ENCODE measurements at regions of chr19 and their contacts with region 1.

Region 1: DNA sequence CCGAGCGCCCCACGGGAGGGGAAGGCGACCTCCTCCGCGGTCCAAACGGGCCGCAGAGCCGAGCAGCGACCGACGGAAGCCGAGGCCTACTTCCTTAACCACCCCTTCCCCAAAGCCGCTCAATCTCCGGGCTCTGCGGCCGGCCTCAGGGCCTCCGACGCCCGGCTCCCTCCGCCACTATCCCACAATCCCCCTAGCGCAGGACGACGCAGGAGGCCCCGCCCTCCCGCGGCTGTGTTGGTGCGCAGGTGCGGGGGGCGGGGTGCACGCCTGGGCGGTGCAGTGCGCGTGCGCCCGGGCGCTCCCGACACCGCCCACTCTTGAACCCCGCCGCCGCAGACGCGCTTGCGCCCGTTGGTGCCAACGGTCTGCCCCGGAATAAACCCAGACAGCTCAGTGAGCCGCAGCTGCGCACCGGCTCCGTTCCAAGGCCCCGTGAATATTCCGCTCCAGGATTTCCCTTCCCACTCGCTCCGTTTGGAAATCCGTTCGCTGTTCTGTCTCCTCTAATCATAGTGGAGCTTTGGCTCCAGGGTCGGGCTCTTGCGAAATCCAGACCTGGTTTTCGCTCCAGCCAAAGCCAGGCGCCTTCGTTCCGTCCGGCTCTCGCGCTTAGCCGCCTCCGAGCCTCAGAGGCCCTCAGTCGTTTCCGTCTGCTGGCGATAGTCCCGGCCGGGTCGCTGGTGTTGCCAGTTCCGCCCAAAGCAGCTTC is at the start of gene PPP6R1:
- DNase-seq: peak; percentile 100
- H3K4me3 ChIP-seq: peak within 1 kb of the TSS; percentile 73 to 88 (median 87)
- H3K27ac ChIP-seq: peak within 1 kb of the TSS; percentile 86
- H3K4me1 ChIP-seq: peaks cover 40% of the 10 kb centered on the region
- H3K27me3 ChIP-seq: no peaks in the 10 kb centered on the region
- CTCF ChIP-seq: no peak
- POLR2A ChIP-seq: peak; percentile 72
- total RNA-seq, gene PPP6R1: 68.3 and 71.8 TPM in 2 replicates

Region 2: DNA sequence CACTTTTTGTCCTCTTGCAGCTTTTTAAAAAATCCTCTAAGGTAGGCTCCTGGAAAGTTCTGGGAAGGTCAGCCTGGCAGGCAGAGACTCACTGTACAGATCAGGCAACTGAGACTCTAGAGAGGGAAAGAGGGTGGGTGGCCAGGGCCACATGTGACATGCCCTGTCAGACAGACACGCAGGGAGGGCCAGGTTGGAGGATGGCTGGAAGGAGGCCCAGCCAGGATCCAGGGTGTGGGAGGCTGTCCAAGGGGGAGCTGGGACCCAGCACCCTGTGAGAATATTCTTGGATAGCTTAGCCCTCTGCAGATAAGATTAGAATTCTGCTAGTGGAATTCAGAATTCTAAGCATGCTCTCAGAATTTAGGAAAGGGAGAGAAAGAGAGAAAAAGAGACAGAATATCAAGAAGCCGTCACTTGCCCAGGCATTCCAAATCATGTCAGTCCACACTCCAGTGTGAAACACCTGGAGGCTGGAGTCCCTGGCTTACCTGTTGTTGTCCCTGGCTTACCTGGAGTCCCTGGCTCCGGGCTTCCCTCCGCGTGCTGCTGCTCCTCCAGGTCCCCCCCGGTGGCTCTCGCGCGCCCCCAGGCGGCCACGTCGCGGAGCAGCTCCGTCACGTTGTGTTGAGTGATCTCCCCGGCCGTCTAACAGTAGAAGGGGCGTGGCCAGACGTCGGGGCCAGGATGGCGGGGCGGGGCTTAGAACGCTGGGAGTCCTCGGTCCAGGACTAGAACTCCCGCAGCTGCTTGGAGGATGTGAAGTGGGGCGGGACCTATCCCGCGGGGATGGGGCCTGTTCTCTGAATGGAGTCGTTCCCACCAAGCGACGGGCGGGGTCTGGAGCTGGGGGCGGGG is 98.6 kb before region 1 on chr19:
- CTCF ChIA-PET with region 1: interaction called, 4 read pairs
- POLR2A ChIA-PET with region 1: no interaction called
- dilution Hi-C with region 1: no loop called
- intact Hi-C with region 1: loop called (anchors 1 kb)
- DNase-seq: peak; percentile 85
- H3K4me3 ChIP-seq: no peak overlapping the region
- H3K27ac ChIP-seq: no peak overlapping the region
- H3K4me1 ChIP-seq: no peaks in the 10 kb centered on the region
- H3K27me3 ChIP-seq: peaks cover 14 to 16% of the 10 kb centered on the region in 2 experiments
- CTCF ChIP-seq: peak; percentile 97 to 98
- POLR2A ChIP-seq: no peak

Region 3: GRCh38 chr19:55166530-55167268 is 92.3 kb before region 1 on chr19 and contains the start of gene DNAAF3:
- CTCF ChIA-PET with region 1: interaction called, 4 read pairs
- POLR2A ChIA-PET with region 1: no interaction called
- dilution Hi-C with region 1: no loop called
- intact Hi-C with region 1: loop called (anchors 1 kb)
- DNase-seq: peak; percentile 97
- H3K4me3 ChIP-seq: peak within 1 kb of the TSS in 2 of 3 experiments; percentile 25 to 52
- H3K27ac ChIP-seq: no peak within 1 kb of the TSS
- H3K4me1 ChIP-seq: no peaks in the 10 kb centered on the region
- H3K27me3 ChIP-seq: peaks cover 8 to 15% of the 10 kb centered on the region in 2 experiments
- CTCF ChIP-seq: no peak
- POLR2A ChIP-seq: no peak
- total RNA-seq, gene DNAAF3: 0.62 TPM in 1 of 2 replicates, not detected in the other

Region 4: DNA sequence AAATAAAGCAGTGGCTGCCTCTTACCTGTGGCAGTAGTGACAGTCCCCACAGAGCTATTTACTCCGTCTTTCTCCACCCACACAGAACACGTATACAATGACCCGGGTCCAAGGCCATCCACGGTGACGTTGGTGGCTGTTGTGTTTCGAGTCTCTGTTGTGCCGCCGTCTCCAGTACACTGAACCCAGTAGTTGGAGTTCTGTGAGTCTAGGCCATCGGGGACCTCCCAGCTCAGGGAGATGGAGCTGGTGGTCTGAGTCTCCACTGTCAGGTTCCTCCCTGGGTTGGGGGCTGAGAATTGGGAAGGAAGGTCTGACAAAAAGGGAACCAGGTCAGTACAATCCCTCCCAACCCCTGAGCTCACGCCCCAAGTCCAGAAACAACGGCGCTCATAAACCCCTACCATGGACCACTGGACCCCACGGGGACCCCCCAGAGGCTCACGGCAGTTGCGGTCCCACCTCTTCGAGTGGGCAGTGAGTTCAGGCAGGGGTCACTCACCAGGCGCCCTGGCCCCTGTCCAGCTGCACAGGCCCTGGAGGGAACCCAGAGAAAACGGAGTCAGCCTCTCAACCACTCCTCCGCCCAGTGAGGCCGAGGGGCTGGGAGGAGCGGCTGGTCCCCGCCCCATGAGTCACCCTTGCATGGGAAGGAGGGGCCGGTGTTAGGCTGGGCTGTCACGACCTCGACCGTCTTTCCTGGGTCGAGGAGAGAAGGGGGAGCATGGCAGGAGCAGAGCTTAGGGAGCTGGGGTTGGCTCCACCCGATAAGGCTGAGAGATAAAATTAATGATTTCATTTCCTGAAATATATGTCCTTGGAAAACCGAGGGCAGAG is 52.1 kb before region 1 on chr19:
- CTCF ChIA-PET with region 1: no interaction called
- POLR2A ChIA-PET with region 1: no interaction called
- dilution Hi-C with region 1: no loop called
- intact Hi-C with region 1: loop called (anchors 2 kb)
- DNase-seq: peak; percentile 76
- H3K4me3 ChIP-seq: no peak overlapping the region
- H3K27ac ChIP-seq: no peak overlapping the region
- H3K4me1 ChIP-seq: peaks cover 24% of the 10 kb centered on the region
- H3K27me3 ChIP-seq: no peaks in the 10 kb centered on the region
- CTCF ChIP-seq: no peak
- POLR2A ChIP-seq: no peak

Region 5: GRCh38 chr19:55216461-55217198 is 42.4 kb before region 1 on chr19:
- CTCF ChIA-PET with region 1: interaction called, 13 read pairs
- POLR2A ChIA-PET with region 1: interaction called, 15 read pairs
- dilution Hi-C with region 1: no loop called
- intact Hi-C with region 1: loop called (anchors 1 kb)
- DNase-seq: peak; percentile 97
- H3K4me3 ChIP-seq: peak overlapping the region in 1 of 3 experiments; percentile 3
- H3K27ac ChIP-seq: peak overlapping the region; percentile 65
- H3K4me1 ChIP-seq: peaks cover 9% of the 10 kb centered on the region
- H3K27me3 ChIP-seq: no peaks in the 10 kb centered on the region
- CTCF ChIP-seq: no peak
- POLR2A ChIP-seq: no peak

Region 6: DNA sequence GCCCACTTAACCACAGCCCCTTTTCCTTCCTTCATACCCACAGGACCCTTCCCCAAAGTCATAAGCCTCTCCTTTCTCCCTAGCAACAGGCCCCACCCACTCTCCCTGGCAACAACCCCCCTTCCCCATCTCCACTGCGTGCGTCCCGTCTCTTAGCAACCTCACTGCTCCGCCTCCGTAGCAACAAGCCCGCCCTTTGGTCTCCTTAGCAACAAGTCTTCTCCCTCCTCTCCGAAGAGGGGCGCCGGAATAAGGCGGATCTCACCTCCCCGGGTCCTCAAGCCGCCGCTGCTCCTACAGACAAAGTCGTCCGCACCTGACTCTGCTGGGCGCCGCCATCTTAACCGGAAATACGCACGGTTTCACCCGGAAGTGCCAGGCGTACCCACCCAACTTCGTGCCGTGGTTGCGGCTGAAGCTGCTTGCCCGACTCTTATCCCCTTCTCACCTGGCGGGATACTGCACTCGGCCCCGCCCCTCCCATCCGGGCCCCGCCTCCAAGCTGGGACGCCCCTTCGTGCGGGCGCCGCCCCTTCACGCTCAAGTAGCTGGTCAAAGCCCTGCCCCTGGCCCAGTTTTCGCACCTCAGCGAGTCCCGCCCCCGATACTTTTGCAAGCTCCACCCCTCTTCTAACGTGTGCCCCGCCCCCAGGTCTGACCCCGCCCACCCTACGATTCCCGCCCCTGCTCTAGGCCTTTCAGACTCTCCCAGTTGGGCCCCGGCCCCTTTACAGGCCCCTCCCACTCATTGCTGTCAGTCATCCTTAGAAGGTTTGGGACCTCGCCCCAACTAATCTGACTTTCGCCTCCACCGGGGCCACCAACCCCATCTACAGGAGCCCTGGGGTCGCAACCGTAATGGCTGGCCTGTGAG is 21.0 kb after region 1 on chr19 and contains the start of gene HSPBP1:
- CTCF ChIA-PET with region 1: interaction called, 7 read pairs
- POLR2A ChIA-PET with region 1: interaction called, 8 read pairs
- dilution Hi-C with region 1: no loop called
- intact Hi-C with region 1: loop called (anchors 1 kb)
- DNase-seq: peak; percentile 93
- H3K4me3 ChIP-seq: peak within 1 kb of the TSS; percentile 66 to 96 (median 79)
- H3K27ac ChIP-seq: peak within 1 kb of the TSS; percentile 65
- H3K4me1 ChIP-seq: peaks cover 3% of the 10 kb centered on the region
- H3K27me3 ChIP-seq: peaks cover 5 to 6% of the 10 kb centered on the region in 2 experiments
- CTCF ChIP-seq: no peak
- POLR2A ChIP-seq: peak; percentile 44
- total RNA-seq, gene HSPBP1: 30.4 and 38.5 TPM in 2 replicates

Region 7: GRCh38 chr19:55407800-55408532 is 149.0 kb after region 1 on chr19:
- CTCF ChIA-PET with region 1: no interaction called
- POLR2A ChIA-PET with region 1: interaction called, 12 read pairs
- dilution Hi-C with region 1: no loop called
- intact Hi-C with region 1: loop called (anchors 1 kb)
- DNase-seq: peak; percentile 100
- H3K4me3 ChIP-seq: peak overlapping the region in 2 of 3 experiments; percentile 28 to 90
- H3K27ac ChIP-seq: peak overlapping the region; percentile 90
- H3K4me1 ChIP-seq: peaks cover 13% of the 10 kb centered on the region
- H3K27me3 ChIP-seq: peaks cover 2 to 5% of the 10 kb centered on the region in 2 experiments
- CTCF ChIP-seq: no peak
- POLR2A ChIP-seq: peak; percentile 58

Measured in endothelial cell of umbilical vein (primary cell).